ENCODE measurements at regions of chr22 and their contacts with region 1.

Region 1: GRCh38 chr22:49548356-49549211 is 279.1 kb downstream of the BRD1 start:
- DNase-seq: peak; percentile 69
- ATAC-seq: peak; percentile 86
- H3K4me3 Mint-ChIP-seq: no peak overlapping the region
- H3K27ac Mint-ChIP-seq: no peak overlapping the region
- H3K4me1 Mint-ChIP-seq: peaks cover 17% of the 10 kb centered on the region
- H3K27me3 Mint-ChIP-seq: peaks cover 12% of the 10 kb centered on the region
- CTCF ChIP-seq: 0 out of 2 replicates have a peak, but pooled peaks have one; percentile 25

Region 2: GRCh38 chr22:49514641-49515040 is 33.9 kb before region 1 on chr22:
- CTCF ChIA-PET with region 1: interaction called, 12 read pairs
- POLR2A ChIA-PET with region 1: no interaction called
- DNase-seq: no peak
- ATAC-seq: no peak
- H3K4me3 Mint-ChIP-seq: no peak overlapping the region
- H3K27ac Mint-ChIP-seq: no peak overlapping the region
- H3K4me1 Mint-ChIP-seq: peaks cover 53% of the 10 kb centered on the region
- H3K27me3 Mint-ChIP-seq: peaks cover 6% of the 10 kb centered on the region
- CTCF ChIP-seq: no peak

Region 3: GRCh38 chr22:49525801-49526535 is 22.6 kb before region 1 on chr22:
- CTCF ChIA-PET with region 1: no interaction called
- POLR2A ChIA-PET with region 1: no interaction called
- DNase-seq: no peak
- ATAC-seq: no peak
- H3K4me3 Mint-ChIP-seq: no peak overlapping the region
- H3K27ac Mint-ChIP-seq: peak overlapping the region; percentile 45; the same call in 1 of the 2 replicates
- H3K4me1 Mint-ChIP-seq: peaks cover 28% of the 10 kb centered on the region
- H3K27me3 Mint-ChIP-seq: no peaks in the 10 kb centered on the region; the same call in 1 of the 2 replicates
- CTCF ChIP-seq: no peak

Measured in WTC11 (cell line).